Activated CD8-positive, alpha-beta T cell treated with anti-CD3 and anti-CD28 coated beads for 36 hours (primary cell): ENCODE measurements at regions of chr15 and their contacts with region 1.

Region 1: GRCh38 chr15:90954712-90955671 is at the start of gene RCCD1:
- DNase-seq: peak; percentile 96
- ATAC-seq: peak; percentile 94
- H3K4me3 Mint-ChIP-seq: peak within 1 kb of the TSS; percentile 85
- H3K27ac Mint-ChIP-seq: peak within 1 kb of the TSS; percentile 94
- H3K4me1 Mint-ChIP-seq: peaks cover 5% of the 10 kb centered on the region
- H3K27me3 Mint-ChIP-seq: no peaks in the 10 kb centered on the region
- CTCF ChIP-seq: no peak
- total RNA-seq, gene RCCD1: 30.0 to 30.9 TPM

Region 2: DNA sequence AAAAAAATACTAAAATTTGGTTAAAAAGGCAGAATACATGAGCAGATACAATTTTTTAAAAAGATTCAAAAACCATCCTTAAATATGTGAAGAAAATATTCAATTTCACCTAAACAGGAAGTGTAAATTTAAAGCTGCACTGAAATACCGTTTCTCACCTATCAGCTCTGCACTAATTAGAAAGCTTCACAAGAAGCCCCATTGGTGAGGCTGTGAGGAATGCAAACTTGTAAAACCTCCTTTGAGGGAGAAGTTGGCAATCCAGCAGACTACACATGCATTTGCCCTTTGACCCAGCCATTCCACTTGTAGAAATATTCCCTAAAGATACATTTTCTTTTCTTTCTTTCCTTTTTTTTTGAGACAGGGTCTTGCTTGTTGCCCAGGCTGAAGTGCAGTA is 219.1 kb before region 1 on chr15:
- CTCF ChIA-PET with region 1: no interaction called
- POLR2A ChIA-PET with region 1: no interaction called
- intact Hi-C with region 1: no loop called
- DNase-seq: no peak
- ATAC-seq: no peak
- H3K4me3 Mint-ChIP-seq: no peak overlapping the region
- H3K27ac Mint-ChIP-seq: no peak overlapping the region
- H3K4me1 Mint-ChIP-seq: peaks cover 13% of the 10 kb centered on the region
- H3K27me3 Mint-ChIP-seq: no peaks in the 10 kb centered on the region
- CTCF ChIP-seq: no peak

Region 3: GRCh38 chr15:90902040-90902839 is 52.8 kb before region 1 on chr15:
- CTCF ChIA-PET with region 1: interaction called, 10 read pairs
- POLR2A ChIA-PET with region 1: interaction called, 7 read pairs
- intact Hi-C with region 1: no loop called
- DNase-seq: peak; percentile 79
- ATAC-seq: peak; percentile 73
- H3K4me3 Mint-ChIP-seq: peak overlapping the region; percentile 85
- H3K27ac Mint-ChIP-seq: peak overlapping the region; percentile 94
- H3K4me1 Mint-ChIP-seq: peaks cover 24% of the 10 kb centered on the region
- H3K27me3 Mint-ChIP-seq: no peaks in the 10 kb centered on the region
- CTCF ChIP-seq: peak; percentile 77

Region 4: DNA sequence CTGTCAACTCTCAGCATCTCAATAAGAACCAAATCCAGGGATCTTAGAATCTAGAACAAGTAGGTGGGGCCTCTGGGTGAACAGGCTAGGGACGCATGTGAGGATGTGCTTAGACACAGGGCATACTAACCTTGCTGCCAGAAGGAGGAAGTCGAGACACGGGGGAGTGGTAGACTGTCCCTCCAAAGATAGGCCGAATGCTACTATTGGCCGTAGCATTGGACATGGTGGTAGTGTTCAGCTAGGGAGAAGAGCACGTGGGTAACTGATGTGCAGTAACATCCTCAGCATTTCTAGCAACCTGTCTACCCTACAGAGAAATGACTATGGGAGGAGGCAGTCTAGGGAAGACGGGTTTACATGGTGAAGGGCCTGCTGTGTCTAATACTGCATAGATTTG is 15.3 kb after region 1 on chr15:
- CTCF ChIA-PET with region 1: interaction called, 42 read pairs
- POLR2A ChIA-PET with region 1: interaction called, 38 read pairs
- intact Hi-C with region 1: no loop called
- DNase-seq: no peak
- ATAC-seq: no peak
- H3K4me3 Mint-ChIP-seq: no peak overlapping the region
- H3K27ac Mint-ChIP-seq: no peak overlapping the region
- H3K4me1 Mint-ChIP-seq: no peaks in the 10 kb centered on the region
- H3K27me3 Mint-ChIP-seq: no peaks in the 10 kb centered on the region
- CTCF ChIP-seq: no peak

Region 5: DNA sequence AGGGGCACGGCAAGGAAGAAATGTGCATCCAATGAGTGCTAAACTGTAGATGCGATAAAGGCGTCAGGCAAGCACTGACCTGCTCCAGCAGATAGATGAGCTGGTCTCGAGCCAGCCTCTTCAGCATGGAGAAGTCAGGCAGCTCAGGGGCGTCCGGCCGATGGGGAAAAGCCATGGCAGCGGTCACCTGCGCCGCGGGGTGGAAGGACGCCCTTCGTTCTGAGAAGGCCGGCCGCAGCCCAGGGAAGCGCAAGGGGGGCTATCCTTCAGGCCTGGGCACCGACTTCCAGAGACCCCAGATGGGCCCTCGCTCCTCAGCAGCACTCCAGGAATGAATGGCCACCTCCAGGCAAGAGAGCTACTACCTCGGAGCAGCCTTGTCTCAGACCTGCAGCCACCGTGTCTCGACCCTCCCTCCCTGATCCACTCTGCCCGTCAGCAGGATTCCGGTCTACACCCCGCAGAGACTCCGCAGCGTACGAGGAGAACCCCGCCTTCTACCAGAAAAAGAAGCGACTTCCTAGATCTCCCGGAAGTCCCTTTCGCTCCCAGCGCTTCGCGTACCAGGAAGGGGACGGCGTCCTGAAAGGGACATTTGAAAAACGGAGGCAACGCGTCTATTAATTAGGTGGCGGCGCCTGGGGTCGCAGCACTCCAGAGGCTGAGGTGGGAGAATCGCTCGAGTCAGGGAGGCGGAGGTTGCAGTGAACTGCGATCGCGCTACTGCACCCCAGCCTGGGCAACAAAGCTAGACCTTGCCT is 67.3 kb after region 1 on chr15 and contains the start of gene VPS33B:
- CTCF ChIA-PET with region 1: interaction called, 15 read pairs
- POLR2A ChIA-PET with region 1: interaction called, 3 read pairs
- intact Hi-C with region 1: no loop called
- DNase-seq: peak; percentile 82
- ATAC-seq: peak; percentile 81
- H3K4me3 Mint-ChIP-seq: peak within 1 kb of the TSS; percentile 83
- H3K27ac Mint-ChIP-seq: peak within 1 kb of the TSS; percentile 90
- H3K4me1 Mint-ChIP-seq: peaks cover 30% of the 10 kb centered on the region
- H3K27me3 Mint-ChIP-seq: no peaks in the 10 kb centered on the region
- CTCF ChIP-seq: no peak
- total RNA-seq, gene VPS33B: 22.2 to 22.9 TPM

Region 6: DNA sequence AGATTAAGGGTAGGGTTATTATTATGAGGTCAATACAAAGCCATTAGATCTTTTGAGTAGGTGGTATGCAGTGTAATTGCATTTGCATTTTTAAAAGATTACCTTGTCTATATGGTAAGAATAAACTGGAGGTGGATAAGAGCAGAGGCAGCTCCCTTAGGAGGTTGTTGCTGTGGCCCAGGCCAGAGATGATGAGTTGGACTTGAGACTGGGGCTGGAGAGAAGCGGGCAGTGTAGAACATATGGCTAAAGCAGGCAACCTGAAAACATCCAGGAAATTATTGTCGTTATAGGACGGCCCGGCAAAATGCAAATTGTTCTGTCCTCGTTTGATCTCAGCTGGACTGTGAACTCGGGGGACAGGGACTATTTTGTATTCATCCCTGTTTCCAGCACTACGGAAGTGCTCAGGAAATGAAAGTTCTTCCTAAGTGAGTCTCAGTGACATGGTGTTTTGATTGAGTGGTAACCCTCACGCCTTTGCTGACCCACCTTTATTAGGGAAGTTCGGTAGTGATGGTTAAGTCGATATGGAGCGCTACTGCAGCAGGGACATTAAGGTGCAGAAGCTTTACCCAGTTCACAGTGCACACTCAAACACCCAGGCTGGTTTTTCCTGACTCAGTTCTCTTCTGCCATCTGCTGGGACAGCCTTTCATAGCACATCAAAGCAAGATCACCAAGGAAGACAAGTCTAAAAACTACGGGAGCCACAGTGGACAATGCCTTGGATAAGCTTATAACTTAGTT is 94.6 kb after region 1 on chr15:
- CTCF ChIA-PET with region 1: interaction called, 28 read pairs
- POLR2A ChIA-PET with region 1: interaction called, 5 read pairs
- intact Hi-C with region 1: no loop called
- DNase-seq: peak; percentile 71
- ATAC-seq: peak; percentile 93
- H3K4me3 Mint-ChIP-seq: no peak overlapping the region
- H3K27ac Mint-ChIP-seq: no peak overlapping the region
- H3K4me1 Mint-ChIP-seq: peaks cover 12% of the 10 kb centered on the region
- H3K27me3 Mint-ChIP-seq: peaks cover 4% of the 10 kb centered on the region
- CTCF ChIP-seq: peak; percentile 49